ENCODE measurements at regions of chr9 and their contacts with region 1.

Region 1: GRCh38 chr9:128117613-128118471 is 9.7 kb downstream of the PTGES2 start:
- DNase-seq: peak; percentile 98
- ATAC-seq: peak; percentile 87
- H3K4me3 Mint-ChIP-seq: peak overlapping the region; percentile 50
- H3K27ac Mint-ChIP-seq: 0 out of 2 replicates have a peak overlapping the region, but pooled peaks have one; percentile 63
- H3K4me1 Mint-ChIP-seq: peaks cover 10% of the 10 kb centered on the region
- H3K27me3 Mint-ChIP-seq: no peaks in the 10 kb centered on the region
- CTCF ChIP-seq: peak; percentile 100

Region 2: GRCh38 chr9:127869310-127870152 is 248.3 kb before region 1 on chr9:
- CTCF ChIA-PET with region 1: interaction called, 10 read pairs
- POLR2A ChIA-PET with region 1: no interaction called
- DNase-seq: peak; percentile 96
- ATAC-seq: peak; percentile 89
- H3K4me3 Mint-ChIP-seq: no peak overlapping the region
- H3K27ac Mint-ChIP-seq: no peak overlapping the region; the same call in 1 of the 2 replicates
- H3K4me1 Mint-ChIP-seq: peaks cover 10% of the 10 kb centered on the region
- H3K27me3 Mint-ChIP-seq: no peaks in the 10 kb centered on the region
- CTCF ChIP-seq: peak; percentile 92

Region 3: GRCh38 chr9:127955294-127956035 is 162.4 kb before region 1 on chr9:
- CTCF ChIA-PET with region 1: interaction called, 22 read pairs
- POLR2A ChIA-PET with region 1: no interaction called
- DNase-seq: peak; percentile 76
- ATAC-seq: peak; percentile 96
- H3K4me3 Mint-ChIP-seq: no peak overlapping the region
- H3K27ac Mint-ChIP-seq: peak overlapping the region; percentile 80
- H3K4me1 Mint-ChIP-seq: peaks cover 18% of the 10 kb centered on the region
- H3K27me3 Mint-ChIP-seq: no peaks in the 10 kb centered on the region
- CTCF ChIP-seq: peak; percentile 32; the same call in 1 of the 2 replicates

Region 4: DNA sequence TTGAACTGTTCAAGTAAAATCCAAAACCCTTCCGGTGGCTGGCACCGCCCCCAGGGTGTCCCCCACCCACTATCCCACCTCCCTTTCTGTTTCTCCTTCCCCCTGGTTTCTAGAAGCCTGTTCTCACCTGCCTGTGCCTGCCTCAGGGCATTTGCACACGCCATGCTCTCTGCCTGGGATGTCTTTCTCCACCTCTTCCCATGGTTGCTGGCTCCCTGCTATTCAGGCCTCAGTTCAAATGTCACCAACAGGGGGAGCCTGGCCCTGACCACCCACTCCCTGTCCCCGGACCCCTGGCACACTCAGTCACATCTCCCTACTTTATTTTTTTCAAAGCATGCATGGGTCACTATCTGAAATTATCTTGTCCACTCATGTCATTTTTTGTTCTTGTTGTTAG is 97.2 kb before region 1 on chr9:
- CTCF ChIA-PET with region 1: interaction called, 20 read pairs
- POLR2A ChIA-PET with region 1: no interaction called
- DNase-seq: peak; percentile 30
- ATAC-seq: peak; percentile 74
- H3K4me3 Mint-ChIP-seq: no peak overlapping the region
- H3K27ac Mint-ChIP-seq: no peak overlapping the region
- H3K4me1 Mint-ChIP-seq: no peaks in the 10 kb centered on the region
- H3K27me3 Mint-ChIP-seq: no peaks in the 10 kb centered on the region
- CTCF ChIP-seq: peak; percentile 23; the same call in 1 of the 2 replicates

Region 5: GRCh38 chr9:128094166-128094967 is 23.5 kb before region 1 on chr9:
- CTCF ChIA-PET with region 1: interaction called, 73 read pairs
- POLR2A ChIA-PET with region 1: interaction called, 3 read pairs
- DNase-seq: peak; percentile 64
- ATAC-seq: peak; percentile 25
- H3K4me3 Mint-ChIP-seq: no peak overlapping the region
- H3K27ac Mint-ChIP-seq: peak overlapping the region; percentile 90
- H3K4me1 Mint-ChIP-seq: peaks cover 44% of the 10 kb centered on the region
- H3K27me3 Mint-ChIP-seq: no peaks in the 10 kb centered on the region
- CTCF ChIP-seq: no peak

Region 6: DNA sequence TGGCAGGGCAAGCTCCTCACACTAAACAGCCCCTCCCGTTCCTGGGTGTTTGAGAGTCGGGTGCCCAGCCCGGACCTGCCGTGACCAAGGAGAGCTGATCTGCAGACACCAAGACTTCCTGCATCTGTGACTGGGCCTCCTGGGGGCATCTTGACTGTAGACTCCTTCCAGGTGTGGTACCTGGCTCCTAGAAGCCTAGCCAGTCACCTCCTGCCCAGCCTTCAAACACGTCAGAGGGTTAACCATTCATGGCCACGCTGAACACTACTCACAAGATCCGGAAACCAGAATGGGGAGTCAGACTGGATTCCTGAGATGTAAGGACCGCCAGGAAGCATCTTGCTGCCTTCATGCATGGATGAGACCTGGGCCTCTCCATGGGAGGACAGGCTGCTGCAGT is 27.7 kb after region 1 on chr9:
- CTCF ChIA-PET with region 1: interaction called, 36 read pairs
- POLR2A ChIA-PET with region 1: interaction called, 4 read pairs
- DNase-seq: no peak
- ATAC-seq: no peak
- H3K4me3 Mint-ChIP-seq: no peak overlapping the region
- H3K27ac Mint-ChIP-seq: 0 out of 2 replicates have a peak overlapping the region, but pooled peaks have one; percentile 65
- H3K4me1 Mint-ChIP-seq: peaks cover 6% of the 10 kb centered on the region
- H3K27me3 Mint-ChIP-seq: no peaks in the 10 kb centered on the region
- CTCF ChIP-seq: no peak

Region 7: GRCh38 chr9:128218518-128219389 is 100.9 kb after region 1 on chr9:
- CTCF ChIA-PET with region 1: interaction called, 10 read pairs
- POLR2A ChIA-PET with region 1: no interaction called
- DNase-seq: peak; percentile 99
- ATAC-seq: peak; percentile 97
- H3K4me3 Mint-ChIP-seq: peak overlapping the region; percentile 75
- H3K27ac Mint-ChIP-seq: peak overlapping the region; percentile 97
- H3K4me1 Mint-ChIP-seq: peaks cover 12% of the 10 kb centered on the region
- H3K27me3 Mint-ChIP-seq: peaks cover 4% of the 10 kb centered on the region; the same call in 1 of the 2 replicates
- CTCF ChIP-seq: no peak